Naive thymus-derived CD4-positive, alpha-beta T cell (primary cell): ENCODE measurements at regions of chr19 and their contacts with region 1.

Region 1: DNA sequence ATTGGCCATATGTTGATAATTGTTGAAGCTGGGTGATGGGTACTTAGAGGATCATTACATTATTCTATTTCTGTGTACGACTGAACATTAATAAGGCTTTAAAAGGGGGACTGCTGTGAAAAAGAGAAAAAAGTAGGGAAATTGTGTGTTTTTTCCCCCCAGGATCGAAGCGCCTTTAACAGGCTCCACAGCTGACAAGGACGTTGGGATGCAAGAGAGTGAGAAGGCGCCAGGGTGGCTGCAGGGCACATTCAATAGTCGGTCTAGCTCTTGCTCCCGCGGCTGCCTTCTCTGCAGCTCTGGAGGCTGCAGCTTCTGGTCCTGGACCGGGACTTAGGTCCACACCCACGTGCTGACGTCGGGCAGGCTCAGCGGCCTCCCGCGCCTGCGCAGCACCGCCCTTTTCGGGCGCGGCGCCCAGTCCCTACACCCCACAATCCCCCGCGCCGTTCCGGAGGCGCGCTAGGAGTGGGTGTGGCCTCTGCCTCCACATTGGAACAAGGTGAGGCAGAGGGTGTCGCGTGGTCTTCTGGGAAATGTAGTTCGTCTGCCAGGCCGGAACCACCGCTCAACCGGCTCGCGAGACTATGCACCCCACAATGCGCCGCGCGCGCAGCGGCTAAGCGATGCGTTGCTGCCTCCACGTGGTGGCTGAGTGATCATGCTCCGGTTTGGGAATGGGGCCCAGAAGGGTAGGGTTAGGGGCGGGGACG is 4.9 kb upstream of the LRFN3 start:
- DNase-seq: peak; percentile 96 to 100 (median 100)
- ATAC-seq: peak; percentile 98
- H3K4me3 ChIP-seq: peak overlapping the region; percentile 59
- H3K4me3 Mint-ChIP-seq: peak overlapping the region; percentile 61 to 94 (median 83)
- H3K27ac ChIP-seq: peak overlapping the region; percentile 73
- H3K27ac Mint-ChIP-seq: peak overlapping the region; percentile 51 to 98 (median 90)
- H3K4me1 ChIP-seq: peaks cover 32 to 44% of the 10 kb centered on the region in 2 donors
- H3K4me1 Mint-ChIP-seq: peaks cover 33 to 63% (median 49%) of the 10 kb centered on the region in 7 donors
- H3K27me3 ChIP-seq: no peaks in the 10 kb centered on the region
- H3K27me3 Mint-ChIP-seq: no peaks in the 10 kb centered on the region

Region 2: GRCh38 chr19:35545001-35545911 is 386.1 kb before region 1 on chr19 and contains the start of gene TMEM147:
- CTCF ChIA-PET with region 1: no interaction called
- POLR2A ChIA-PET with region 1: no interaction called
- intact Hi-C with region 1: loop called in 1 of 2 experiments (anchors 1 kb)
- DNase-seq: peak; percentile 60 to 90 (median 69)
- ATAC-seq: peak; percentile 91
- H3K4me3 ChIP-seq: peak within 1 kb of the TSS; percentile 78
- H3K4me3 Mint-ChIP-seq: peak within 1 kb of the TSS; percentile 79 to 93 (median 89)
- H3K27ac ChIP-seq: peak within 1 kb of the TSS; percentile 84
- H3K27ac Mint-ChIP-seq: peak within 1 kb of the TSS; percentile 52 to 96 (median 90)
- H3K4me1 ChIP-seq: peaks cover 13 to 16% of the 10 kb centered on the region in 2 donors
- H3K4me1 Mint-ChIP-seq: peaks cover 27 to 41% (median 38%) of the 10 kb centered on the region in 7 donors
- H3K27me3 ChIP-seq: no peaks in the 10 kb centered on the region
- H3K27me3 Mint-ChIP-seq: no peaks in the 10 kb centered on the region
- total RNA-seq, gene TMEM147: 24.7 to 54.0 (median 34.6) TPM

Region 3: DNA sequence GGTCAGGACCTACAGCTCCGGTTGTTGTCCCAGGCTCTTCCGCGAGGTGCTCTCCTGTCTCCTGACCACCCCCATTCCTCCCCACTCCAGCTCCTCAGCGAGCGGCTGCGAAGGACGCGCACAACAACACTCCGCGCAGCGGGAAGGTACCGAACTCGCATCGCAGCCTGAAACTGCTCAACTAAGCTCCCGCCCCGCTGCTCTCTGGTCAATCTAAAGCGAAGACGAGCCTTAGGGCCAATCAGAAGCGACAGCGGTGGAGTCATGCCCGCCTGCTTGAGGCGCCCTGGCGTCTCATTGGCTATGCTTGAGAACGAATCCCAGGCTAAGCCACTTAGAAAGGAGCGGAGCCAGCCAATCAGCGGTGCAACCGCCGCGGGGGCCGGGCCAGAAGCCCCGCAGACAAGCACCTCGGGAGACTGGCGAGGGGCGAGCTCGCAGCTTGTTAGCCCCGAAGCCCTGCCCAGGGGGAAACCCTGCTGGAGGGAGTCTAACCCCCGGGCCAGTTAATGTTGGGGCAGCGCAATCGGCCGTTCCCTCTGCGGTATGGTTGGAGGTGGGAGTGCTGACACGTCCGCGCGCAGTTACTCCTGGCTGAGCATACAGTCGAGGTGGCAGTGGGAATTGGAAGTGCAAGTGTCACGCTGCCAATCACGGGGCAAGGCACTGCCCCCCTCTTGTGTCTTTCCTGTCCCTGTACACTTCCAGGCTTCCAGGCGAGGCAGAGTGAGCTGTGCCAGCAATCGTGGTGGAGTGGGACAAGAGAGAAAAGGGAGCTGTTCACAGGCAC is 228.9 kb before region 1 on chr19:
- CTCF ChIA-PET with region 1: interaction called, 3 read pairs
- POLR2A ChIA-PET with region 1: interaction called, 3 read pairs
- intact Hi-C with region 1: loop called in 1 of 2 experiments (anchors 1 kb)
- DNase-seq: peak; percentile 66 to 96 (median 90)
- ATAC-seq: peak; percentile 100
- H3K4me3 ChIP-seq: peak overlapping the region; percentile 85
- H3K4me3 Mint-ChIP-seq: peak overlapping the region; percentile 88 to 100 (median 96)
- H3K27ac ChIP-seq: peak overlapping the region; percentile 66
- H3K27ac Mint-ChIP-seq: peak overlapping the region; percentile 79 to 98 (median 93)
- H3K4me1 ChIP-seq: no peaks in the 10 kb centered on the region
- H3K4me1 Mint-ChIP-seq: peaks cover 5 to 22% (median 6%) of the 10 kb centered on the region in 7 donors
- H3K27me3 ChIP-seq: no peaks in the 10 kb centered on the region
- H3K27me3 Mint-ChIP-seq: peaks cover 0 to 4% (median 0%) of the 10 kb centered on the region in 5 donors

Region 4: GRCh38 chr19:35757749-35758608 is 173.3 kb before region 1 on chr19 and contains the start of gene PROSER3:
- CTCF ChIA-PET with region 1: no interaction called
- POLR2A ChIA-PET with region 1: no interaction called
- intact Hi-C with region 1: loop called in 1 of 2 experiments (anchors 1 kb)
- DNase-seq: peak; percentile 93 to 100 (median 99)
- ATAC-seq: peak; percentile 98
- H3K4me3 ChIP-seq: peak within 1 kb of the TSS; percentile 99
- H3K4me3 Mint-ChIP-seq: peak within 1 kb of the TSS; percentile 92 to 100 (median 96)
- H3K27ac ChIP-seq: peak within 1 kb of the TSS; percentile 92
- H3K27ac Mint-ChIP-seq: peak within 1 kb of the TSS; percentile 89 to 99 (median 95)
- H3K4me1 ChIP-seq: peaks cover 10 to 35% of the 10 kb centered on the region in 2 donors
- H3K4me1 Mint-ChIP-seq: peaks cover 13 to 42% (median 37%) of the 10 kb centered on the region in 7 donors
- H3K27me3 ChIP-seq: peaks cover 0 to 4% of the 10 kb centered on the region in 2 donors
- H3K27me3 Mint-ChIP-seq: peaks cover 0 to 12% (median 5%) of the 10 kb centered on the region in 5 donors
- total RNA-seq, gene PROSER3: 34.0 to 47.3 (median 39.7) TPM

Region 5: DNA sequence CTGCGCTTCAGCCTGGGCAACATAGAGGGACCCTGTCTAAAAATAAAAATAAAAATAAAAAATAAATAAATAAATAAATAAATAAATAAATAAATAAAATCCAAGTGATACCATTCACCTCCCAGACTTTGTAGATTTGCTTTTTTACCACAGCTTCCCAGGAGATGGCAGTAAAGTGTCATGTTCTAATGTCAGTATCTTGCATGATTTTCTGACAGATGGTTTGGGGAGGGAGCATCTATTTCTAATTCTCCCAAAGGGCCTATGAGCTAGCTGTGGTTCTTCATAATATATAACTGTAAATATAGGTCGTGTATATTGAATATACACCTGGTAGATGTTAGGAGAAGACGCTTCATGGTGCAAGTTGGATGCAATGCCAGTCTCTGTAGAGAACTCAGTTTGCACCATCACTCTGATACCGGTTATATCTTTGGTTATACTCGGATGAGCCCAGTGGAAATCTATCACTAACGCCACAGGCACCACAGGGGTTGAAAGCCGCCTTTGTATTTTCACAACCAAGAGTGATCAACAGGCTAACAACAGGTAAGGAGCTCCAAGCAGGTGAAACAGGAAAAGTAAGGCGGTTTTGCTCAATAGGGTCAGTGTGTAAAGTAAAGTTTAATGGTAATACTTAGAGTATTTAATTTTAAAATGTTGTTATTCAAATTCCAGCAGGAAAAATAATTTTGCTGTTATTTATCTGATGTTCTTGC is 49.0 kb before region 1 on chr19:
- CTCF ChIA-PET with region 1: interaction called, 52 read pairs
- POLR2A ChIA-PET with region 1: interaction called, 49 read pairs
- intact Hi-C with region 1: loop called (anchors 1 kb)
- DNase-seq: peak in 7 of 9 donors; percentile 53 to 75 (median 71)
- ATAC-seq: peak; percentile 66
- H3K4me3 ChIP-seq: no peak overlapping the region
- H3K4me3 Mint-ChIP-seq: no peak overlapping the region
- H3K27ac ChIP-seq: no peak overlapping the region
- H3K27ac Mint-ChIP-seq: peak overlapping the region in 4 of 9 donors; percentile 42 to 55 (median 50)
- H3K4me1 ChIP-seq: peaks cover 4 to 9% of the 10 kb centered on the region in 2 donors
- H3K4me1 Mint-ChIP-seq: peaks cover 8 to 17% (median 11%) of the 10 kb centered on the region in 7 donors
- H3K27me3 ChIP-seq: peaks cover 4 to 6% of the 10 kb centered on the region in 2 donors
- H3K27me3 Mint-ChIP-seq: peaks cover 12 to 20% (median 18%) of the 10 kb centered on the region in 5 donors

Region 6: DNA sequence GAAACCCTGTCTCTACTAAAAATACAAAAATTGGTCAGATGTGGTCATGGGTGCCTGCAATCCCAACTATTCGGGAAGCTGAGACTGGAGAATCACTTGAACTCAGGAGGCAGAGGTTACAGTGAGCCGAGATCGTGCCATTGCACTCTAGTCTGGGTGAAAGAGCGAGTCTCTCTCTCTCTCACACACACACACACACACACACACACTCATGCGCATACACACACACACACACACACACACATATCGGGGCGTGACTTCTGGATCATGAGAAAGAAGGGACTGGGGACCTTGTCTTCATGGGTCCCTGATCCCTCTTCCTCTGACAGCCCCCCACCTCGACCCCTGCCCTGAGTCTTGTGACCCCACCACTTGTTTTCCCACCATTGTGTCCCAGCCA is 51.9 kb after region 1 on chr19:
- CTCF ChIA-PET with region 1: no interaction called
- POLR2A ChIA-PET with region 1: no interaction called
- intact Hi-C with region 1: no loop called
- DNase-seq: no peak
- ATAC-seq: no peak
- H3K4me3 ChIP-seq: no peak overlapping the region
- H3K4me3 Mint-ChIP-seq: no peak overlapping the region
- H3K27ac ChIP-seq: no peak overlapping the region
- H3K27ac Mint-ChIP-seq: no peak overlapping the region
- H3K4me1 ChIP-seq: no peaks in the 10 kb centered on the region
- H3K4me1 Mint-ChIP-seq: peaks cover 0 to 8% (median 7%) of the 10 kb centered on the region in 7 donors
- H3K27me3 ChIP-seq: peaks cover 0 to 4% of the 10 kb centered on the region in 2 donors
- H3K27me3 Mint-ChIP-seq: peaks cover 38 to 64% (median 56%) of the 10 kb centered on the region in 5 donors

Region 7: GRCh38 chr19:35995048-35995993 is 64.0 kb after region 1 on chr19 and contains the start of gene SDHAF1:
- CTCF ChIA-PET with region 1: no interaction called
- POLR2A ChIA-PET with region 1: interaction called, 4 read pairs
- intact Hi-C with region 1: loop called in 1 of 2 experiments (anchors 1 kb)
- DNase-seq: peak; percentile 77 to 94 (median 87)
- ATAC-seq: peak; percentile 96
- H3K4me3 ChIP-seq: peak within 1 kb of the TSS; percentile 84
- H3K4me3 Mint-ChIP-seq: peak within 1 kb of the TSS; percentile 89 to 99 (median 96)
- H3K27ac ChIP-seq: peak within 1 kb of the TSS; percentile 74
- H3K27ac Mint-ChIP-seq: peak within 1 kb of the TSS; percentile 90 to 97 (median 95)
- H3K4me1 ChIP-seq: peaks cover 11 to 16% of the 10 kb centered on the region in 2 donors
- H3K4me1 Mint-ChIP-seq: peaks cover 22 to 44% (median 33%) of the 10 kb centered on the region in 7 donors
- H3K27me3 ChIP-seq: no peaks in the 10 kb centered on the region
- H3K27me3 Mint-ChIP-seq: no peaks in the 10 kb centered on the region
- total RNA-seq, gene SDHAF1: 7.8 to 26.1 (median 17.8) TPM